ENCODE measurements at regions of chr7 and their contacts with region 1.

Region 1: GRCh38 chr7:141975806-141976523 is 2.4 kb upstream of the TAS2R38 start:
- DNase-seq: peak; percentile 88
- H3K4me3 Mint-ChIP-seq: peak overlapping the region; percentile 80
- H3K27ac Mint-ChIP-seq: no peak overlapping the region
- H3K4me1 Mint-ChIP-seq: peaks cover 10% of the 10 kb centered on the region
- H3K27me3 Mint-ChIP-seq: no peaks in the 10 kb centered on the region

Region 2: DNA sequence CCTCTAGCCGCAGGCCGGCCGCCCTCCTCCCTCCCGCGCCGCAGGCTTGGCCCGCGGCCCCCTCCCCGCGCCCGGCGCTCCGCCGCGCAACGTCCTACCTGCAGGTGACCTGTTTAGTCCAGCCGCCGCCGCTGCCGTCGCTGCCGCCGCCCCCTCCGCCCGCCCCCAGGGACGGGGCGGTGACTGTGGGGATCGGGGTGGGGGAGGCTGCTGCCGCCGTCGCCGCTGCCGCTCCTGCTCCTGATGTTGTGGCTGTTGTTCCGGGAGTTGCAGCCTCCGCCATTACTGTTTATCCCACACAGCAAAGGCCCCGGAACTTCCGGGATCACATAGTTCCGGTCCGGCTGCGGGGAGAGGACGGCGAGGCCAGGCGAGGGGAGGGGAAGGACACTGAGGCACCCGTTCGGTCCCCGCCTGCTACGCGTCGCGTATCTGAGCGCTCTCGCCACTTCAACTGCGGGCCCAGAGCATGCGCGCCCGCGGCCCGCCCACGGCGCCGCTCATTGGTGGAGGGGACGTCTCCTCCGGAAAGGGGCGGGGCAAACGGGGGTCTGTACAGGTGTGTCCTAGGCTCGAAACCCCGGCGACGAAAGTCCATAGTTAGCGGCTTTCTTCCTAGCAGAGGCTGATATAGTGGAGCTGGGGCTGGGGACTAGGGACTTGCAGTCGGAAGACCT is 1496.8 kb before region 1 on chr7 and contains the start of gene MKRN1:
- intact Hi-C with region 1: no loop called
- DNase-seq: peak; percentile 98
- H3K4me3 Mint-ChIP-seq: peak within 1 kb of the TSS; percentile 99
- H3K27ac Mint-ChIP-seq: peak within 1 kb of the TSS; percentile 97
- H3K4me1 Mint-ChIP-seq: peaks cover 26% of the 10 kb centered on the region
- H3K27me3 Mint-ChIP-seq: peaks cover 13% of the 10 kb centered on the region
- total RNA-seq, gene MKRN1: 59.7 and 67.5 TPM in 2 replicates

Region 3: DNA sequence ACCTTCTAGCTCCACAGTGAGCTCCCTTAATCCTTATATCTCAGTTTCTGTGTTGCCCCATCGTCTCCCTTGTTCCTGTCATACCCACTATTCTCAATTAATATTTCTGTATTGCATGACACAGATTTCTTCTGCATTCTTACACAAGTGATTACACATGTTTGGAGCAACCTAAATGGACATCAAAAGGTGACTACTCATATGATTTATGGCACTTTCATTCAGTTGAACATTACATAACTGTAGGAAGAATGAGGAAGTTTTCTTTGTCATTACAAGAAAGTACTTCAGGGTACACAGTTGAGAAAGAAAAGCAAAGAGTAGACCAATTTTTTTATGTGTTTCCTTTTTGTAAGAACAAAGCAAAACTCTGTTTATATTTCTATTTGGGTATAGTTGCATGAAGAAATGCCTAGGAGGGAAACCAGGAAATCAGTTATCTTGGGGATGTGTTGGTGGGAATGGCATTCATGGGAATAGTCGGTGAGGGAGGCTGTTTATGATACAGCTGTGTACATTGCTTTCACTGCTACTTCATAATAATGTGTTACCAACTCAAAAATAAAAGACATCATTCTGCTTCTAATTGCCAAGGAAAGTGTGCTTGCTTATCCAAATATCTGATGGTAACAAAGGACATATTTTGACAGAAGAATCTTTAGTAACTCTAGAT is 111.1 kb before region 1 on chr7:
- intact Hi-C with region 1: no loop called
- DNase-seq: no peak
- H3K4me3 Mint-ChIP-seq: no peak overlapping the region
- H3K27ac Mint-ChIP-seq: no peak overlapping the region
- H3K4me1 Mint-ChIP-seq: no peaks in the 10 kb centered on the region
- H3K27me3 Mint-ChIP-seq: peaks cover 2% of the 10 kb centered on the region

Region 4: GRCh38 chr7:142066536-142066935 is 90.6 kb after region 1 on chr7:
- intact Hi-C with region 1: no loop called
- DNase-seq: no peak
- H3K4me3 Mint-ChIP-seq: no peak overlapping the region
- H3K27ac Mint-ChIP-seq: no peak overlapping the region
- H3K4me1 Mint-ChIP-seq: no peaks in the 10 kb centered on the region
- H3K27me3 Mint-ChIP-seq: no peaks in the 10 kb centered on the region

Region 5: DNA sequence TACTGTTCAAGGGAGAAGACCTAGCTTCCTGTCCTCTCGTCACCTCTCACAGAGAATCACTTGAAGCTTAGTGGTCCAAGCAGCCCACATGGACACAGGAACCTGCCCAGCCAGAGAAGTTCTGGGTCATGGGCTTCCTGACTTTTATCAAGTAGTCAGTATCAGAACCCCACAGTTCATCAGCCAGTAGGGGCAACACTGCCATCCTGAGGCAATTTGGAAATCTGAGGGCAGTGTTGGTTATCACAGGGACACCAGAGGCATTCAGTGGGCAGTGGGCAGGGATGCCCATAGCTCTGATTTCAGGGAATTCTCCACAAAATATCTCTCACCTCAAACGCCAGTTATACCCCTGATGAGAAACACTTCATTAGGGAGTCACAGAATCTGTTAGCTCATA is 113.1 kb after region 1 on chr7:
- intact Hi-C with region 1: no loop called
- DNase-seq: no peak
- H3K4me3 Mint-ChIP-seq: no peak overlapping the region
- H3K27ac Mint-ChIP-seq: no peak overlapping the region
- H3K4me1 Mint-ChIP-seq: no peaks in the 10 kb centered on the region
- H3K27me3 Mint-ChIP-seq: no peaks in the 10 kb centered on the region

Region 6: GRCh38 chr7:142188846-142189245 is 212.9 kb after region 1 on chr7:
- intact Hi-C with region 1: loop called (anchors 2 kb)
- DNase-seq: no peak
- H3K4me3 Mint-ChIP-seq: no peak overlapping the region
- H3K27ac Mint-ChIP-seq: no peak overlapping the region
- H3K4me1 Mint-ChIP-seq: peaks cover 7% of the 10 kb centered on the region
- H3K27me3 Mint-ChIP-seq: peaks cover 26% of the 10 kb centered on the region

Region 7: GRCh38 chr7:142301923-142302550 is 326.1 kb after region 1 on chr7:
- intact Hi-C with region 1: loop called (anchors 5 kb)
- DNase-seq: peak; percentile 65
- H3K4me3 Mint-ChIP-seq: no peak overlapping the region
- H3K27ac Mint-ChIP-seq: no peak overlapping the region
- H3K4me1 Mint-ChIP-seq: peaks cover 5% of the 10 kb centered on the region
- H3K27me3 Mint-ChIP-seq: peaks cover 19% of the 10 kb centered on the region

Region 8: GRCh38 chr7:142853739-142854371 is 877.9 kb after region 1 on chr7:
- intact Hi-C with region 1: loop called (anchors 10 kb)
- DNase-seq: peak; percentile 90
- H3K4me3 Mint-ChIP-seq: peak overlapping the region; percentile 94
- H3K27ac Mint-ChIP-seq: peak overlapping the region; percentile 82
- H3K4me1 Mint-ChIP-seq: peaks cover 14% of the 10 kb centered on the region
- H3K27me3 Mint-ChIP-seq: peaks cover 17% of the 10 kb centered on the region

Region 9: DNA sequence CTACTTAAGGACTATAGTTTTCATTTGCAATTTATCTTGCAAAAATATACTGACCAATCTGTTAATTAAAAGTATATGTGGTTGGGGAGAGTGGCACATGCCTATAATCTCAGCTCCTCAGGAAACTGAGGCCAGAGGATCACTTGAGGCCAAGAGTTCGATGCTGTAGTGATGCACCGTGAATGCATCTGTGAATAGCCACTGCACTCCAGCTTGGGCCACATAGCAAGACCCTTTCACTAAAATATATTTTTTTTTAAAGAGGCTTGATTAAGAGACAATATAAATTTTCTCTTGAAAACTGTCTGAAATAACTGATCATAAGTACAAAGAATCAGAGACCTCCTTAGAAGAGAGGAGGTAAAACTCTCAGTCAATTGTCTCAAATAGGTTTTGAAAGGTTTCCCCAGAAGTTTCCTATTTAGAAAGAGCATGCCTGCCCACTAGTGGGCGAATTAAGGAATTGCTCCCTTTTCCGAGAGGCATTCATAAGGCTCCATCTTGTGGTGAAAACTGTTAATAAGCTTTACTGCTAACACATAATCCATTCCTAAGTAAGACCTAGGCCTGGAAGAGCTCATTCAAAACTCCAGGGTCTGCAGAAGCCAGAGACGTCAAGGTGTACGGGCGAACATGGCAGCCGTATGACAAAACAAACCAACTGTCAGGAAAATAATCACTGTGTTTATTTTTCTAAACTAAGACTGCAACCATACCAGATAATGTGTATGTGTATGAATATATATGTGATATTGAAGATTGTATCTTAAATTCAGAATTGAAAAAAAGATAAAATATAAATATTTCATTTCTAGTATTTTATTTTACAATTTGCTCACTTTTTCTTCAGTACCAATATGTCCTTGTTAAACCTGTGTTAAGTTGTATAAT is 1239.1 kb after region 1 on chr7:
- intact Hi-C with region 1: loop called (anchors 10 kb)
- DNase-seq: peak; percentile 91
- H3K4me3 Mint-ChIP-seq: no peak overlapping the region
- H3K27ac Mint-ChIP-seq: no peak overlapping the region
- H3K4me1 Mint-ChIP-seq: no peaks in the 10 kb centered on the region
- H3K27me3 Mint-ChIP-seq: peaks cover 24% of the 10 kb centered on the region